Ovary (tissue), 10 donors: ENCODE measurements at regions of chr1 and their contacts with region 1.

Region 1: GRCh38 chr1:161192476-161193465 is 6.1 kb downstream of the ADAMTS4 start:
- DNase-seq: peak in 4 of 5 donors; percentile 55 to 79 (median 69)
- H3K4me3 ChIP-seq: no peak overlapping the region
- H3K27ac ChIP-seq: no peak overlapping the region
- H3K4me1 ChIP-seq: peaks cover 7% of the 10 kb centered on the region
- H3K27me3 ChIP-seq: no peaks in the 10 kb centered on the region
- CTCF ChIP-seq: peak; percentile 55 to 75 (median 71)
- EP300 ChIP-seq: no peak
- POLR2A ChIP-seq: no peak

Region 2: GRCh38 chr1:161382214-161383019 is 189.6 kb after region 1 on chr1:
- intact Hi-C with region 1: loop called (anchors 5 to 10 kb)
- DNase-seq: peak in 1 of 5 donors; percentile 45
- H3K4me3 ChIP-seq: no peak overlapping the region
- H3K27ac ChIP-seq: no peak overlapping the region
- H3K4me1 ChIP-seq: no peaks in the 10 kb centered on the region
- H3K27me3 ChIP-seq: no peaks in the 10 kb centered on the region
- CTCF ChIP-seq: peak in 2 of 3 donors; percentile 61 to 70
- EP300 ChIP-seq: no peak
- POLR2A ChIP-seq: no peak

Region 3: GRCh38 chr1:161389691-161390558 is 197.2 kb after region 1 on chr1:
- intact Hi-C with region 1: loop called in 2 of 4 experiments (anchors 10 kb)
- DNase-seq: peak; percentile 98 to 99 (median 99)
- H3K4me3 ChIP-seq: peak overlapping the region; percentile 77
- H3K27ac ChIP-seq: peak overlapping the region; percentile 63 to 82
- H3K4me1 ChIP-seq: no peaks in the 10 kb centered on the region
- H3K27me3 ChIP-seq: no peaks in the 10 kb centered on the region
- CTCF ChIP-seq: no peak
- EP300 ChIP-seq: peak; percentile 100
- POLR2A ChIP-seq: peak; percentile 99

Region 4: GRCh38 chr1:161420763-161421455 is 228.1 kb after region 1 on chr1:
- intact Hi-C with region 1: no loop called
- DNase-seq: no peak
- H3K4me3 ChIP-seq: no peak overlapping the region
- H3K27ac ChIP-seq: no peak overlapping the region
- H3K4me1 ChIP-seq: no peaks in the 10 kb centered on the region
- H3K27me3 ChIP-seq: no peaks in the 10 kb centered on the region
- CTCF ChIP-seq: no peak
- EP300 ChIP-seq: no peak
- POLR2A ChIP-seq: no peak